ENCODE measurements at regions of chr4 and their contacts with region 1.

Region 1: DNA sequence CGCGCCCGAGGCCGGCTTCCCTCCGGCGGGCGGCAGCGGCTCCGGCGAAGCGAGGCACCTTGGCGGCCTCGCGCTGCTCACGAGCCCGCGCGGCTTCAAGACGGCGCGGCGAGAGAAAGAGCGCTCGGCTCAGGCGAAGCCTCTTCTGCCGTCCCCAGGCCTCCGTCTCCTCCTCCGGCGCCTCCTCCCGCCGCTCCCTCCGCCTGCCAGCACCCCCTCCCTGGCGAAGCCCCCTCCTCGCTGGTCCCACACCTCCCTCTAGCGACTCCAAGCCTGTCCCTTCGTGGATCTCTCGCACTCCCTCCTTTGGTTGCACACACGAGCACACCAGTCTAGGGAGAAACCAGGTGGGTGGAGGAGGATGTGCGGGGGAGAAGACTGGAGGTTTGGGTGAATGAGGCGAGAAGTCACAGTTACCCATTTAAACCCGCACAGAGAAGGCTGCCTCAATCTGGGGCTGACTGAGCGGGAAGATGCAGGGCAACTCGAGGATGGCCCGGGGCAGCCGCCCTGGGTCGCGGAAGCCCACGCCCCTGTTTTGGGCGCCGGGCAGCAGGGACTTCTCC is at the start of gene CAMK2D:
- DNase-seq: peak; percentile 95
- H3K4me3 ChIP-seq: peak within 1 kb of the TSS; percentile 75 to 89 (median 80)
- H3K27ac ChIP-seq: peak within 1 kb of the TSS; percentile 92 to 99 (median 98)
- H3K4me1 ChIP-seq: peaks cover 0 to 34% (median 24%) of the 10 kb centered on the region in 4 donors
- H3K27me3 ChIP-seq: no peaks in the 10 kb centered on the region
- CTCF ChIP-seq: peak in 3 of 4 experiments; percentile 42 to 64 (median 47)
- EP300 ChIP-seq: no peak
- POLR2A ChIP-seq: peak; percentile 27 to 36
- total RNA-seq, gene CAMK2D: 54.0 to 78.1 (median 68.8) TPM

Region 2: DNA sequence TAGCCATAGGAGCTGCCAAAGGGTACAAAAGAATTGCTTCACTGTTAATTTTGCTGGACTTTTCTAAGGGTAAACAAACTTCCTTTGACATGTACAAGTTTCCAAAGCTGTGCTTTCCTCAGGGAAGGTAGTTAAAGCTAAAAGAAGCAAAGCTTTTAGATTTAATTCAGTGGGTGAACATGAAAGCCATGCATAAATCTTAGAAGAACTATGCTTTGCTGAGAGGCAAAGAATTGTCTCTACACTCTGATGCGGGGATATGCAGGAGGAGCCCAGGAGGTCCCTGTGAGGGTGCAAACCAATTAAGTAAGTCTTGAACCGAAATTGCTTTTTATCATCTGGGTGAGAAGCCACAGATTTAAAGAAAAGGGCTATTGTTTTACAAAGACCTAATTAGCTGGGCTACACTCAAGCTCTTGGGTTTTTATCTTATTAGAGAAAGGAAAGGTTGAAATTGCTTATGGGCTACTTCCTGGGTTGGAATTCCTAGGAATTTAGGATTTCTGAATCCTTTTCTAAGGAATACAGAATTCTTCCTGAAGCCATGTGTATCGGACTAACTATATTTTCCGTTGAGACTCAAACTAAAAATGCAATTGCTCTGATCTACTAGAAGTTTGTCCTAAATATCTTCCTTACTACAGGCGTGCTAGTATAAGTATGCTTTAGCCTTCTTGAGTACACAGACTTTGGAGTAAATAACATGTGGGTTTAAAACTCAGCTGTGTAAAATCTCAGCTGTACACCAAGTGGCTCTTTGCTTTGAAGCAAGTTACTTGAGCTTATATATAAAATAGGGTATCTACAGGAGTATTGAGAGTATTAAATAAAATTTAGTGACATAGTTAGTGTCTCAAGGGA is 900.6 kb before region 1 on chr4:
- intact Hi-C with region 1: no loop called
- DNase-seq: no peak
- H3K4me3 ChIP-seq: peak overlapping the region in 1 of 4 donors; percentile 5
- H3K27ac ChIP-seq: peak overlapping the region; percentile 61 to 70 (median 69)
- H3K4me1 ChIP-seq: peaks cover 0 to 61% (median 54%) of the 10 kb centered on the region in 4 donors
- H3K27me3 ChIP-seq: no peaks in the 10 kb centered on the region
- CTCF ChIP-seq: no peak
- EP300 ChIP-seq: no peak
- POLR2A ChIP-seq: no peak

Region 3: GRCh38 chr4:113435893-113436292 is 325.8 kb before region 1 on chr4:
- intact Hi-C with region 1: loop called (anchors 5 kb)
- DNase-seq: peak; percentile 85
- H3K4me3 ChIP-seq: no peak overlapping the region
- H3K27ac ChIP-seq: peak overlapping the region; percentile 59 to 81 (median 72)
- H3K4me1 ChIP-seq: peaks cover 0 to 63% (median 49%) of the 10 kb centered on the region in 4 donors
- H3K27me3 ChIP-seq: no peaks in the 10 kb centered on the region
- CTCF ChIP-seq: no peak
- EP300 ChIP-seq: peak in 1 of 4 donors; percentile 5
- POLR2A ChIP-seq: no peak

Region 4: GRCh38 chr4:113684534-113685091 is 77.1 kb before region 1 on chr4:
- intact Hi-C with region 1: loop called (anchors 5 kb)
- DNase-seq: peak; percentile 83
- H3K4me3 ChIP-seq: no peak overlapping the region
- H3K27ac ChIP-seq: peak overlapping the region; percentile 46 to 77 (median 70)
- H3K4me1 ChIP-seq: peaks cover 0 to 46% (median 38%) of the 10 kb centered on the region in 4 donors
- H3K27me3 ChIP-seq: no peaks in the 10 kb centered on the region
- CTCF ChIP-seq: peak; percentile 9 to 41 (median 35)
- EP300 ChIP-seq: peak in 2 of 4 donors; percentile 16 to 38
- POLR2A ChIP-seq: no peak

Region 5: GRCh38 chr4:113979148-113979904 is 217.6 kb after region 1 on chr4 and contains the start of gene ARSJ:
- intact Hi-C with region 1: loop called (anchors 2 kb)
- DNase-seq: peak; percentile 81
- H3K4me3 ChIP-seq: peak within 1 kb of the TSS; percentile 56 to 81 (median 63)
- H3K27ac ChIP-seq: peak within 1 kb of the TSS; percentile 86 to 91 (median 89)
- H3K4me1 ChIP-seq: peaks cover 0 to 50% (median 25%) of the 10 kb centered on the region in 4 donors
- H3K27me3 ChIP-seq: no peaks in the 10 kb centered on the region
- CTCF ChIP-seq: no peak
- EP300 ChIP-seq: peak in 1 of 4 donors; percentile 4
- POLR2A ChIP-seq: peak; percentile 21 to 29
- total RNA-seq, gene ARSJ: 7.2 to 11.9 (median 10.1) TPM